ENCODE measurements at regions of chr2 and their contacts with region 1.

Region 1: DNA sequence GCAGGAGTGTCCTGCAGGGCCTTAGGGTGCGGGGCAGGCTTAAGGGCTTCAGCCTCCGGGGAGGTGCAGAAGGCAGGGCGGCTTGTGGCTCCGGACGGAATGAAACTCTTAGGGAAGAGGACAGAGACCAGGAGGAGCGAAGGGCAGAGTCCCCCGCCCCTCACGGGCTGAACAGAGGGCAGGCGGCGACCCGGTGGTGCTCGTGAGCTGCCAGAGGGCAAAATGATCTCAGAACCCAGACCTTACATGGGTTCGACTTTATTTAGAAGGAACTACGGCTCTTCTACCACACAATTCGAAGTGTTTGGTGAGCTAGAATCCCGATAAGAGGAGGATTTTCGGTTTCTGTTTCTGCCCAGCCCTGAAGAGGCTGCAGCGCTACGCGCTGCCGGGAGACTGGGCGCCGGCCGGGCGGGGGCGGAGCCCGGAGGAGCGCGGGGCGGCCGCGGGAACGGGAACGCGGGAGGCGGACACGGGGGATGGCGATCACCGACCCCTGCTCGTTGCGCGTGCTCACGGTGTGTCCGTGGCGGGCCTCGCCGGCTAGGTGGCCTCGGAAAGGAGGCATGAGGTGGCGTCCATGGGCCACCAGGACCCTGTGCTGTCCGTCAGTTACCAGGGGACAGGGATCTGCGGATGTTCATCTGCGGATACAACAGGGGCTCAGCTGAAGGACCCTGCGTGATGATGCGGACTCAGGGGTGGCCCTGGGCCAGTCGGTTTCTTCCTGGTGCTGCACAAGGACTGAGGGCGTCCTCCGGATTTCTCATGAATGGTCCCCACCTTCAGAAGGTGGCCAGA is 4.2 kb upstream of the SP100 start:
- DNase-seq: peak; percentile 64 to 81
- ATAC-seq: peak; percentile 75 to 86 (median 76)
- H3K4me3 ChIP-seq: peak overlapping the region; percentile 73
- H3K4me3 Mint-ChIP-seq: peak overlapping the region; percentile 100
- H3K27ac ChIP-seq: peak overlapping the region; percentile 90
- H3K27ac Mint-ChIP-seq: peak overlapping the region; percentile 98 to 99
- H3K4me1 ChIP-seq: peaks cover 40% of the 10 kb centered on the region
- H3K4me1 Mint-ChIP-seq: peaks cover 53 to 54% of the 10 kb centered on the region in 2 donors
- H3K27me3 ChIP-seq: no peaks in the 10 kb centered on the region
- H3K27me3 Mint-ChIP-seq: no peaks in the 10 kb centered on the region
- CTCF ChIP-seq: no peak

Region 2: GRCh38 chr2:230225486-230225885 is 186.3 kb before region 1 on chr2 and contains the start of gene SP140:
- intact Hi-C with region 1: loop called (anchors 5 kb)
- DNase-seq: peak; percentile 68 to 93
- ATAC-seq: peak; percentile 92 to 98 (median 97)
- H3K4me3 ChIP-seq: peak within 1 kb of the TSS; percentile 56
- H3K4me3 Mint-ChIP-seq: peak within 1 kb of the TSS; percentile 92
- H3K27ac ChIP-seq: peak within 1 kb of the TSS; percentile 90
- H3K27ac Mint-ChIP-seq: peak within 1 kb of the TSS; percentile 99 to 100
- H3K4me1 ChIP-seq: peaks cover 40% of the 10 kb centered on the region
- H3K4me1 Mint-ChIP-seq: peaks cover 50 to 61% of the 10 kb centered on the region in 2 donors
- H3K27me3 ChIP-seq: no peaks in the 10 kb centered on the region
- H3K27me3 Mint-ChIP-seq: no peaks in the 10 kb centered on the region
- CTCF ChIP-seq: no peak
- total RNA-seq, gene SP140: 69.1 to 89.9 (median 77.4) TPM

Region 3: DNA sequence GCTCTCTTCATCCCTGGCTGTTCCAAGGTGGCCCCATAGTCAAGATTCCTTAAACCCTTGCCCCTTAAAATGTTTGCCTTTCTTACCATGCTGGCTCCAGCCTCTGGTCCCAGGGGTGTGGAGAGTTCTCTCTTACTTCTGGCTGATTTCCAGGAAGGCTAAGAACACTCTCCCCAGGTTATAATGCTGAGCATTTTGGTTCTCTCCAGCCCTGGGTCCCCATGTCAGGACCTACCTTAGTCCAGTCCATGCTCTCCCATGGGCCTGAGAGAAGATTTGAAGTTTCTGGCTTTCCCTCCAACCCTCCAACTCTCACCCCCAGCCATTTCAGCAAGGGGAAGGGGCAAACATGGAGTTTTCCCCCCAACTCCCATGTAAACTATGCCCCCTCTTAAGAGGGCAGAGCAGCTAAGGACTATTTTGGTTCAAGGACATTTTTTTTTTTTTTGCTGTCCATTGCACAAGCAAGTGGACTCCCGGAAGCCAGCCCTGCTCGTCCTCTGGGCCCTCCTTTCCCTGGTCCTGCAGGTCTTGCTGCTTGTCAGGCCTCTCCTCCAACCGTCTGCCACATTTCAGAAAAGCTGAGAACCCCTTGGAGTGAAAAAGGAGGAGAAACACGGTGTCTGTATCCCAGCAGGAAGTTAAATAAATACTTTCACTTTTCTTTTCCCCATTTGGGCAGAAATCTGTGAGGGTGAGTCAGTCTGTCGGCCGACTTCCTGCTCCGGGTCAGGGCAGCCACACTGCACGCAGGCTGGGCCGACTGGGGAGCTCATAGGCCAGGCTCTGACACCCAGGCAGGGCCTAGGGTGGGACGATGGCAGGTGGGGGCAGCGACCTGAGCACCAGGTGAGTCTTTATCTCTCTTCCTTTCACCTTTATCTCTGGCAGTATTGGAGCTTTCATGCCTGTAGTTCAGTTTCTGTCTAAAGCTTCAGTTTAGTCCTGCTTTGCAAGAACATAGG is 85.0 kb before region 1 on chr2 and contains the start of gene SP140L:
- intact Hi-C with region 1: loop called (anchors 5 kb)
- DNase-seq: peak; percentile 72 to 88
- ATAC-seq: peak; percentile 96 to 100 (median 98)
- H3K4me3 ChIP-seq: peak within 1 kb of the TSS; percentile 73
- H3K4me3 Mint-ChIP-seq: peak within 1 kb of the TSS; percentile 98
- H3K27ac ChIP-seq: peak within 1 kb of the TSS; percentile 97
- H3K27ac Mint-ChIP-seq: peak within 1 kb of the TSS; percentile 98 to 99
- H3K4me1 ChIP-seq: peaks cover 34% of the 10 kb centered on the region
- H3K4me1 Mint-ChIP-seq: peaks cover 73 to 74% of the 10 kb centered on the region in 2 donors
- H3K27me3 ChIP-seq: no peaks in the 10 kb centered on the region
- H3K27me3 Mint-ChIP-seq: no peaks in the 10 kb centered on the region
- CTCF ChIP-seq: no peak
- total RNA-seq, gene SP140L: 58.4 to 92.6 (median 73.4) TPM

Region 4: GRCh38 chr2:230441227-230441897 is 29.6 kb after region 1 on chr2:
- intact Hi-C with region 1: loop called (anchors 1 kb)
- DNase-seq: peak; percentile 54 to 74
- ATAC-seq: peak; percentile 87 to 98 (median 90)
- H3K4me3 ChIP-seq: no peak overlapping the region
- H3K4me3 Mint-ChIP-seq: peak overlapping the region; percentile 63
- H3K27ac ChIP-seq: peak overlapping the region; percentile 54
- H3K27ac Mint-ChIP-seq: peak overlapping the region; percentile 76 to 85
- H3K4me1 ChIP-seq: peaks cover 3% of the 10 kb centered on the region
- H3K4me1 Mint-ChIP-seq: peaks cover 56 to 58% of the 10 kb centered on the region in 2 donors
- H3K27me3 ChIP-seq: no peaks in the 10 kb centered on the region
- H3K27me3 Mint-ChIP-seq: no peaks in the 10 kb centered on the region
- CTCF ChIP-seq: no peak

Region 5: GRCh38 chr2:230614913-230615332 is 203.2 kb after region 1 on chr2:
- intact Hi-C with region 1: loop called (anchors 10 kb)
- DNase-seq: peak in 1 of 2 donors; percentile 32
- ATAC-seq: no peak
- H3K4me3 ChIP-seq: no peak overlapping the region
- H3K4me3 Mint-ChIP-seq: no peak overlapping the region
- H3K27ac ChIP-seq: no peak overlapping the region
- H3K27ac Mint-ChIP-seq: no peak overlapping the region
- H3K4me1 ChIP-seq: peaks cover 6% of the 10 kb centered on the region
- H3K4me1 Mint-ChIP-seq: peaks cover 7% of the 10 kb centered on the region in 2 donors
- H3K27me3 ChIP-seq: no peaks in the 10 kb centered on the region
- H3K27me3 Mint-ChIP-seq: no peaks in the 10 kb centered on the region
- CTCF ChIP-seq: no peak

Region 6: DNA sequence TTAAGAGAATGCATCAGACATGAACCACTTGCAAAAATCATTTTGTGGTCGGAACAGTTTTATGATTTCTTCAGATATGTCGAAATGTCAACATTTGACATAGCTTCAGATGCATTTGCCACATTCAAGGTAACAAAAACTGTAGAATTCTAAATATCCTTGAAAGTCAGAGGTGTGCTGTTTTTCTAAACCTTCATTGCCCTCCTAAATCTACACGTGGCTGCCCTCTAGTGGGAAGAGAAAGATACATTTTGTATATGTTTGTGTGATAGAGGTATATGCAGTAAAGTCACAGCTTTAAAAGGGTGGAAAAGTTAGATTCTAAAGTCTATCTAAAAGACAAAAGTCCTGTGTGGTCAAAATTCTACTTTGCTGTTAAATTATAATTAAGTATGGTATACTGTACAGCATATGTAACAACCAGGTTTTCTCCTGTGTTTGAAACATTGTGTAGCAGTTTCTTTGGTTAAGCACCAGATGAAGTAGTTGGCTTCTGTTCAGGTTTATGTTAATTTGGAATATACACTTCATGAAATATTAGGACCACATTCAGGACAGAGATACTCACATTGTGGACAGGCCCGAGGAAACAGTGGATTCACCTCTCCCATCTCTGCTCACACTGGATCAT is 387.1 kb after region 1 on chr2:
- intact Hi-C with region 1: loop called (anchors 10 kb)
- DNase-seq: peak in 1 of 2 donors; percentile 80
- ATAC-seq: peak; percentile 30 to 48 (median 46)
- H3K4me3 ChIP-seq: no peak overlapping the region
- H3K4me3 Mint-ChIP-seq: no peak overlapping the region
- H3K27ac ChIP-seq: no peak overlapping the region
- H3K27ac Mint-ChIP-seq: no peak overlapping the region
- H3K4me1 ChIP-seq: peaks cover 18% of the 10 kb centered on the region
- H3K4me1 Mint-ChIP-seq: peaks cover 22 to 24% of the 10 kb centered on the region in 2 donors
- H3K27me3 ChIP-seq: no peaks in the 10 kb centered on the region
- H3K27me3 Mint-ChIP-seq: no peaks in the 10 kb centered on the region
- CTCF ChIP-seq: peak; percentile 78

Region 7: GRCh38 chr2:230814616-230815015 is 402.8 kb after region 1 on chr2:
- intact Hi-C with region 1: no loop called
- DNase-seq: peak in 1 of 2 donors; percentile 36
- ATAC-seq: peak in 1 of 3 donors; percentile 65
- H3K4me3 ChIP-seq: no peak overlapping the region
- H3K4me3 Mint-ChIP-seq: no peak overlapping the region
- H3K27ac ChIP-seq: no peak overlapping the region
- H3K27ac Mint-ChIP-seq: no peak overlapping the region
- H3K4me1 ChIP-seq: no peaks in the 10 kb centered on the region
- H3K4me1 Mint-ChIP-seq: peaks cover 0 to 23% of the 10 kb centered on the region in 2 donors
- H3K27me3 ChIP-seq: no peaks in the 10 kb centered on the region
- H3K27me3 Mint-ChIP-seq: no peaks in the 10 kb centered on the region
- CTCF ChIP-seq: no peak